Natural killer cell (primary cell): ENCODE measurements at regions of chr19 and their contacts with region 1.

Region 1: GRCh38 chr19:48419158-48419920 is 25.9 kb downstream of the GRIN2D start:
- DNase-seq: peak; percentile 66 to 82
- ATAC-seq: peak; percentile 86 to 88 (median 87)
- H3K4me3 ChIP-seq: peak overlapping the region; percentile 4
- H3K4me3 Mint-ChIP-seq: peak overlapping the region; percentile 85
- H3K27ac ChIP-seq: no peak overlapping the region
- H3K27ac Mint-ChIP-seq: peak overlapping the region; percentile 76 to 91
- H3K4me1 ChIP-seq: peaks cover 32% of the 10 kb centered on the region
- H3K4me1 Mint-ChIP-seq: peaks cover 14 to 29% of the 10 kb centered on the region in 2 donors
- H3K27me3 ChIP-seq: peaks cover 13% of the 10 kb centered on the region
- H3K27me3 Mint-ChIP-seq: peaks cover 0 to 12% of the 10 kb centered on the region in 2 donors
- CTCF ChIP-seq: no peak

Region 2: GRCh38 chr19:48308631-48309586 is 110.4 kb before region 1 on chr19:
- intact Hi-C with region 1: no loop called
- DNase-seq: no peak
- ATAC-seq: no peak
- H3K4me3 ChIP-seq: no peak overlapping the region
- H3K4me3 Mint-ChIP-seq: no peak overlapping the region
- H3K27ac ChIP-seq: no peak overlapping the region
- H3K27ac Mint-ChIP-seq: no peak overlapping the region
- H3K4me1 ChIP-seq: no peaks in the 10 kb centered on the region
- H3K4me1 Mint-ChIP-seq: no peaks in the 10 kb centered on the region
- H3K27me3 ChIP-seq: no peaks in the 10 kb centered on the region
- H3K27me3 Mint-ChIP-seq: no peaks in the 10 kb centered on the region
- CTCF ChIP-seq: no peak

Region 3: GRCh38 chr19:48403606-48404005 is 15.7 kb before region 1 on chr19:
- intact Hi-C with region 1: loop called (anchors 2 kb)
- DNase-seq: peak in 1 of 2 donors; percentile 77
- ATAC-seq: peak; percentile 75 to 81 (median 78)
- H3K4me3 ChIP-seq: no peak overlapping the region
- H3K4me3 Mint-ChIP-seq: peak overlapping the region; percentile 7
- H3K27ac ChIP-seq: no peak overlapping the region
- H3K27ac Mint-ChIP-seq: peak overlapping the region in 1 of 2 donors; percentile 49
- H3K4me1 ChIP-seq: peaks cover 30% of the 10 kb centered on the region
- H3K4me1 Mint-ChIP-seq: peaks cover 33 to 36% of the 10 kb centered on the region in 2 donors
- H3K27me3 ChIP-seq: peaks cover 3% of the 10 kb centered on the region
- H3K27me3 Mint-ChIP-seq: peaks cover 14 to 22% of the 10 kb centered on the region in 2 donors
- CTCF ChIP-seq: no peak